Activated CD4-positive, alpha-beta memory T cell treated with anti-CD3 and anti-CD28 coated beads for 36 hours (primary cell): ENCODE measurements at regions of chr5 and their contacts with region 1.

Region 1: DNA sequence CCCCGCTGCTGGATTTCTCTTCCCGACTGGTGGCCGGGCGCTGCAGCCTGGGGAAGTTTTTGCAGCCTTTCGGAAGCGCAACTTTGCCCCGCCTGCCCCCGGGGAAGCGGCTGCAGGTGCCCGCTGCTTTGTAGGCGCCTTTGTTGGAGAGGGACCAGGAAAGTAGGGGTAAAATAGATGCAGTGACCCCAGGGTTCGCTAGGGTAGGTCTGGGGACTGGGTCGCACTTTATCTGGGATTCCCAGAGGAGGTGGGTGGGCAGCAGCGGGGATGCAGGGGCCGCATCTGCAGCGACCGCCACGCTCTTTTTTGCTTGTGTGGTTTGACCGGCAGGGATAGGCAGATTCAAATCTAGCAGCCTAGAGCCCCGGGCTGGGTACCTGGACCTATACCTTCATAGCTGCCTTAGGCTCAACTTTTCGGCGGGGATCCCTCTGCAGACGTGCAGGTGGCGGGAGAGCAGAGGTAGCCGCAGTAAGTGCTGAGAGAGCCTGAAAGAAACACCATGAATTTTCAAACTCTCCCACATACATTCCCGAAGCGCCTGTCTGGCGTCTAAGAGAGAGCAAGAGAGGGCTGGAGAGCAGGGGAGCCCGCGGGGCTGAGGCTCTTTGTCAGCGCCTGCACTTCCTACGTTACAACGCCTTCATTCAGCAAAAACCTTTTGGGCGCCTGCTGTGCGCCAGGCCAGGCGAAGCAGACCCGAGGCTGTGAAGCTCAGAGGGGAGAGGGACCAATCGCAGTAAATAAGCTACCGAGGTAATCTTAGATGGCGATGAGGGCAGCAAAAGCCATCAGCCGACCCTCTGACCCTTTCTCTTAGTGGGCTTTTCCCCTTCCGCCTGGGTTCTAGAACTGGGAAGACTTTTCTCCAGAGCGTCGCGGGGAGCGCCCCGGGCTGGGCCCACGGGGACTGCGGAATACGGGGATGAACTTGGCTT is 642 bp downstream of the SV2C start:
- DNase-seq: peak; percentile 40
- H3K4me3 Mint-ChIP-seq: peak overlapping the region; percentile 69
- H3K27ac Mint-ChIP-seq: no peak overlapping the region
- H3K4me1 Mint-ChIP-seq: peaks cover 28% of the 10 kb centered on the region
- H3K27me3 Mint-ChIP-seq: peaks cover 57% of the 10 kb centered on the region

Region 2: GRCh38 chr5:75756981-75757380 is 326.8 kb before region 1 on chr5:
- CTCF ChIA-PET with region 1: no interaction called
- POLR2A ChIA-PET with region 1: no interaction called
- intact Hi-C with region 1: no loop called
- DNase-seq: no peak
- H3K4me3 Mint-ChIP-seq: no peak overlapping the region
- H3K27ac Mint-ChIP-seq: no peak overlapping the region
- H3K4me1 Mint-ChIP-seq: no peaks in the 10 kb centered on the region
- H3K27me3 Mint-ChIP-seq: peaks cover 14% of the 10 kb centered on the region

Region 3: DNA sequence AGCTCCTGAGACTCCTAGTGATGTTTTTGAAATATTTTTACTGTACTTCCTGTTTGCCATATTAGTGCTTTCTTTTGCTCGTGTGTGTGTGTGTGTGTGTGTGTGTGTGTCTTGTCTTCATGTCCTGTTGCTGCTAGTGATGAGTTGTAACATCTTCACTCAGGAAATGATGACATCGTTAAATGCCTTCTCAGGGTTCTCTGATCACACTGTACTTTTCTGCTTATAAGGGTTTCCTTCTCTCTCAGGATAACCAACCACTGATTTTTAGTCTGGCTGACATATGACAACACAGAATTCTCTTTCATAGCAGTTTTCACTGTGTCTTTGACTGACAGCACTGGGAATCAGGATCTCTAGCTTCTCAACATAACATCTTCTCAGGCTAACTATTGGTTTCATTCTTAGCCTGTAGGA is 15.5 kb after region 1 on chr5:
- CTCF ChIA-PET with region 1: no interaction called
- POLR2A ChIA-PET with region 1: no interaction called
- intact Hi-C with region 1: loop called (anchors 1 kb)
- DNase-seq: peak; percentile 52
- H3K4me3 Mint-ChIP-seq: no peak overlapping the region
- H3K27ac Mint-ChIP-seq: no peak overlapping the region
- H3K4me1 Mint-ChIP-seq: peaks cover 9% of the 10 kb centered on the region
- H3K27me3 Mint-ChIP-seq: peaks cover 6% of the 10 kb centered on the region